ENCODE measurements at regions of chr2 and their contacts with region 1.

Region 1: DNA sequence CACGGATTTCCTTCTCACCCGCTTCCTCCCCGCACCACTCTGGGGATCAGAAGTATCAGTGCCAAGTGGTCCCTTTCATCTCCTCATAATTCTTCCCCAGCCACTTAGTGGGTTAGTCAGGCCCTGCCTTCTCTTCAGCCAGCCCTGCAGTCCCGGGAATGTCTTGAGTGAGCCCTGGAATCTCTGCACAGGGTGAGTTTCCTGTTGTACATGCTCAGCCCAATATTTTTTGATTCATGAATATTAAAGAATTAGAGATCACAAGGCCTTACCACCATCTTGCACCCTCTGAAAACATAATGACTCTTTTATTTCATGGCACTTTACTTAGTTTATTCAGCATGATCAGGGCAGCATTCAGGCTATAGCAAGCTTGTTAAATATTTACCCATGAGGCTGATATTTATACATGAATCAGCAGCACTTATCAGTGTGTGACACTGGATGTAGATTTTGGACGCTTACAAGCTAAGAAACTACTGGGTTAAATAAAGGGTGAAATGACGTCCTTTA is 159.4 kb upstream of the FOSL2 start:
- DNase-seq: no peak
- ATAC-seq: no peak
- H3K4me3 Mint-ChIP-seq: no peak overlapping the region
- H3K27ac Mint-ChIP-seq: no peak overlapping the region
- H3K4me1 Mint-ChIP-seq: no peaks in the 10 kb centered on the region
- H3K27me3 Mint-ChIP-seq: no peaks in the 10 kb centered on the region
- CTCF ChIP-seq: no peak

Region 2: GRCh38 chr2:27703638-27704341 is 529.4 kb before region 1 on chr2:
- CTCF ChIA-PET with region 1: no interaction called
- POLR2A ChIA-PET with region 1: no interaction called
- intact Hi-C with region 1: loop called (anchors 10 kb)
- DNase-seq: peak; percentile 55
- ATAC-seq: peak; percentile 79
- H3K4me3 Mint-ChIP-seq: no peak overlapping the region
- H3K27ac Mint-ChIP-seq: no peak overlapping the region
- H3K4me1 Mint-ChIP-seq: peaks cover 3% of the 10 kb centered on the region
- H3K27me3 Mint-ChIP-seq: peaks cover 9% of the 10 kb centered on the region
- CTCF ChIP-seq: peak; percentile 75